Activated CD4-positive, alpha-beta memory T cell treated with anti-CD3 and anti-CD28 coated beads for 36 hours (primary cell): ENCODE measurements at regions of chr7 and their contacts with region 1.

Region 1: GRCh38 chr7:909358-910329 is 33.3 kb downstream of the GET4 start:
- DNase-seq: no peak
- H3K4me3 Mint-ChIP-seq: peak overlapping the region; percentile 8
- H3K27ac Mint-ChIP-seq: no peak overlapping the region
- H3K4me1 Mint-ChIP-seq: peaks cover 10% of the 10 kb centered on the region
- H3K27me3 Mint-ChIP-seq: no peaks in the 10 kb centered on the region

Region 2: GRCh38 chr7:726084-726853 is 183.4 kb before region 1 on chr7 and contains the start of gene DNAAF5:
- CTCF ChIA-PET with region 1: no interaction called
- POLR2A ChIA-PET with region 1: no interaction called
- intact Hi-C with region 1: no loop called
- DNase-seq: peak; percentile 92
- H3K4me3 Mint-ChIP-seq: peak within 1 kb of the TSS; percentile 86
- H3K27ac Mint-ChIP-seq: peak within 1 kb of the TSS; percentile 76
- H3K4me1 Mint-ChIP-seq: peaks cover 27% of the 10 kb centered on the region
- H3K27me3 Mint-ChIP-seq: no peaks in the 10 kb centered on the region
- total RNA-seq, gene DNAAF5: 26.8 to 29.5 TPM

Region 3: DNA sequence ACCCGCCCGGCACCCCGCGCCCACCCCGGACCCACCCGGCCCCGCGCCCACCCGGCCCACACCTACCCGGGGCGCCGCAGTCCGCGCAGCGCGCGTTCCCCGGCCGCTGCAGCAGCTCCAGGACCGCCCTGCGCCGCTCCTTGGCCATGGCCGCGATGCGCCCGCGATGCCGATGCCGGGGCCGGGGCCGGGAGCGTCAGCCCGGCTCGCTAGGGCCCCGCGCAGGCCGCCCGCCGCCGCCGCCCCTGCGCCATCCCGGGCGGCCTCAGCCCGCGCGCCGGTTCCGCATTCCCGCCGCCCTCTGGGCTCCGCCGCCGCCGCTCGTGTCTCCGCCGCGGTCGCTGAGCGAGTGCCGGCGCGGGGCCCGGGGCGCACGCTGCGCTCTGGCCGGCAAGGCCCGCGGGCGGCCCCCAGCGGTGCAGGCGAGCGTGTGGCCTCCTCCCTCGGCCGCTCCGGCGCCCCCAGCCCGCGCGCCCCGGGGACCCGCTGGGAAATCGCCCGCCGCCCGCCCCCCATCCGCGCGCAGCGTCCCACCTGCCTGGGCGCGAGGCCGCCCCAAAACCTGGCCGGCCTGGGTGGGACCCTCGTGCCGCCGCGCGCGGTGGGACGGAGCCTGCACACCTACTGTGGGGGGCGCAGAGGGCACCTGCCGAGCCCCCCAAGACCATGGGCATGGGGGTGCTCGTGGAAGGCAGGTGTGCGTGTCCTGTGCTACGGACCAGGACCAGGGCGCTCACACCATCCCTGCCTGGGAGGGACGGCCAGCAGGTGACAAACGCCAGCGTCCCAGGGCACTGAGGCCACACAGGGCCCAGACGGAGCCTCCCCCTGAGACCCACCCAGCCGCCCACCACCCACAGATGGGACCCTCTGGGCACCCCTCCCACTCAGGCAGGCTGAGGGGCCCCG is 44.9 kb after region 1 on chr7 and contains the start of gene ADAP1:
- CTCF ChIA-PET with region 1: interaction called, 54 read pairs
- POLR2A ChIA-PET with region 1: no interaction called
- intact Hi-C with region 1: loop called (anchors 1 kb)
- DNase-seq: peak; percentile 62
- H3K4me3 Mint-ChIP-seq: peak within 1 kb of the TSS; percentile 37
- H3K27ac Mint-ChIP-seq: no peak within 1 kb of the TSS
- H3K4me1 Mint-ChIP-seq: peaks cover 7% of the 10 kb centered on the region
- H3K27me3 Mint-ChIP-seq: peaks cover 5% of the 10 kb centered on the region
- total RNA-seq, gene ADAP1: 14.1 to 16.1 TPM